Calu3 (cell line): ENCODE measurements at regions of chr5 and their contacts with region 1.

Region 1: DNA sequence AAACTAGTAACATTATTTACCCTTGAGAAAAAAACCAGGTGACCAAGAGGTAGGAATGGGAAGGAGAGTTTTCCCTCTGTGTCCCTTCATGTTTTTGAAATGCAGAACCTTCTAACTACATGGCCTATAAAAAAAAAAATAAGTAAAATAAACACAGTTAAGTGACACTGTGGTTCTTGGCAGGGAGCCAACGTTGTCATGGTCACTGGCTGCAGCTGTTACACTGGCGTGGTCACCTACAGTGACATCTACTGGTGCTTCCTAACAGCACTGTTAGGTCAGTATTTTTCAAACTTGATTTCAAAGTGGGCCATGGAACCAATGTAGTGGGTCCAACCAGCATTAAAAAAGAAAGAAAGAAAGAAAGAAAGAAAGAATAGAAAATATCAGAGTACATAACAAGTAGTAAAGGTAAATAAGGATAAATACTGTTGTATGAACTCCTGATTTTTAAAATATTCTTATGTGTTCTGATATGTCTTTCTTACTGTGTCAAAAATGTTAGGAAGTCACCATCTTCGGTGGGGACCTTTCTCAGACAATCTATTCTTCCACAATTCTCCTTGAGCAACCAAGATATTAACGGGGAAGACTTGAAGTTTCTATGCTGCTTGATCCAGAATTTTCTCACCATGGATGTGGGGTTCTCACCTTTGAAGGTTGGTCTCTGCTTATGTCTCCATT is 59.1 kb upstream of the PJA2 start:
- DNase-seq: peak; percentile 95
- H3K4me3 Mint-ChIP-seq: no peak overlapping the region
- H3K27ac Mint-ChIP-seq: peak overlapping the region; percentile 2
- H3K4me1 Mint-ChIP-seq: peaks cover 39% of the 10 kb centered on the region
- H3K27me3 Mint-ChIP-seq: no peaks in the 10 kb centered on the region
- CTCF ChIP-seq: peak; percentile 66

Region 2: DNA sequence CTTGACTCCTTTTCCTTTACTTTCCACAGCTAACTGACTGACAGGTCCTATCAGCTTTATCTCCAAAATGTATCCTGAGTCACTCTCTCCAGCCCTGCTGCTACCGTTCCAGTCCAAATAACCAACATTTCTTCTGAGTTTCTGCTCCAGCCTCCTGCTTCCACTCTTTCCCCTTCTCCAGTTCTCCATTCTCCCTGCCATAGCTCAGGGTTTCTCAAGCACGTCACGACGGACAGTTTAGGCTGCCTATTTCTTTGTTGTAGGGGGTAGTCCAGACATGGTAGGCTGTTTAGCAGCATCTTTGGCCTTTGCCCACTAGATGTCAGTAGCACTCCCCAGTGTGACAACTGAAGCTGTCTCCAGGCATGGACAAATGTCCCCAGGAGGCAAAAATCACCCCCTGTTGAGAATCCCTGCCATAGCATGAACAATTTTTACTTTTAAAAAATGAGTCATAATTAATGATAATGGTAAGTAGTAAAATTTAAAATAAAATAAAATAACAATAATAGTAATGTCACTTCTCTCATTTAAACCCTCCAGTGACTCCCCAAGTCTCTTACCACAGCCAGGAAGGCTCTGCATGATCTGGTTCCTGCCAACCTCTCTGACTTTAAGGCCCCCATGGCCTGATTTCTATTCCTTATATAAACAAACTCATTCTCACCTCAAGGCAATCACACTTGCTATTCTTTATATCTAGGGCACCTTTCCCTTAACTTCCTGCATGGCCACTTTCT is 826.5 kb before region 1 on chr5:
- CTCF ChIA-PET with region 1: interaction called, 10 read pairs
- intact Hi-C with region 1: no loop called
- DNase-seq: peak; percentile 82
- H3K4me3 Mint-ChIP-seq: peak overlapping the region; percentile 31
- H3K27ac Mint-ChIP-seq: peak overlapping the region; percentile 30
- H3K4me1 Mint-ChIP-seq: peaks cover 17% of the 10 kb centered on the region
- H3K27me3 Mint-ChIP-seq: no peaks in the 10 kb centered on the region
- CTCF ChIP-seq: peak; percentile 93

Region 3: GRCh38 chr5:108727651-108728565 is 741.0 kb before region 1 on chr5:
- CTCF ChIA-PET with region 1: no interaction called
- intact Hi-C with region 1: loop called (anchors 5 kb)
- DNase-seq: peak; percentile 95
- H3K4me3 Mint-ChIP-seq: peak overlapping the region; percentile 94
- H3K27ac Mint-ChIP-seq: peak overlapping the region; percentile 90
- H3K4me1 Mint-ChIP-seq: peaks cover 39% of the 10 kb centered on the region
- H3K27me3 Mint-ChIP-seq: no peaks in the 10 kb centered on the region
- CTCF ChIP-seq: no peak

Region 4: DNA sequence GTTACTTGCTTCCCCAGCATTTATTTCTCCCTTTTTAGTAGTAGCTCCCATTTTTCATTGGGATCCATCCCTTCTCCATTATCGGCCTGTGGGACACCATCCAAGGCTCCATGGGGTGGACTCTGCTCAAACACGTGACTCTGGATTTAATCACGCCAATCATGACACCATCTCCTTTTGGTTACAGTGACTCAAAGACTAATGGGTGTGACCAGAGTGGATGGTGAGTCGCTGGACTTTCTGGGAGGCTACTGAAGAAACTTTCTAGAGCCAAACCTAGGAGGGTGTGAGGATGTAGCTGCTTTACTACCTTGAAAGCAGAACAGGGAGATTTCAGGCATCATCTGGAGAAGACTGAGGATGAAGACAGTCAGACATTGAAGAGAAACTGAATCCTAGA is 152.2 kb before region 1 on chr5:
- CTCF ChIA-PET with region 1: interaction called, 3 read pairs
- intact Hi-C with region 1: loop called (anchors 1 kb)
- DNase-seq: no peak
- H3K4me3 Mint-ChIP-seq: no peak overlapping the region
- H3K27ac Mint-ChIP-seq: peak overlapping the region; percentile 25
- H3K4me1 Mint-ChIP-seq: peaks cover 27% of the 10 kb centered on the region
- H3K27me3 Mint-ChIP-seq: no peaks in the 10 kb centered on the region
- CTCF ChIP-seq: no peak

Region 5: DNA sequence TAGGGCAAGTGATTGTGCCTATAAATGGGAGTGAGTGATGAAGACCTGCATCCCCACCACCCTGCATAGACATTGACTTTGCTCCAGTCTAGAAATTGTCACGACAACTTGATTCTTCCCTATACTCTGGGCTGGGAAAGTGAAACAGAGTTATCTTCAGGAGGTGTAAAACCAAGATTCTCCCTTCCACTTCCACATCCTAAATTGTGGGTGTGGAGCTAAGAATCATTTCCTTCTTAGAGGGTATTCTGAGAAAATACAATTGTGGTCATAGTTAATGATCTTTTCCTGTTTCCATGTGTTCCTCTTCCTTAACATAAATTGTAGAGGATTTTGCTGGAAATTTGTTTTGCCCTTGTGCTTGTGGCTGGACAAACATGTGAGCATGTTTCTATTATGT is 37.7 kb after region 1 on chr5:
- CTCF ChIA-PET with region 1: no interaction called
- intact Hi-C with region 1: no loop called
- DNase-seq: no peak
- H3K4me3 Mint-ChIP-seq: no peak overlapping the region
- H3K27ac Mint-ChIP-seq: no peak overlapping the region
- H3K4me1 Mint-ChIP-seq: no peaks in the 10 kb centered on the region
- H3K27me3 Mint-ChIP-seq: no peaks in the 10 kb centered on the region
- CTCF ChIP-seq: no peak

Region 6: DNA sequence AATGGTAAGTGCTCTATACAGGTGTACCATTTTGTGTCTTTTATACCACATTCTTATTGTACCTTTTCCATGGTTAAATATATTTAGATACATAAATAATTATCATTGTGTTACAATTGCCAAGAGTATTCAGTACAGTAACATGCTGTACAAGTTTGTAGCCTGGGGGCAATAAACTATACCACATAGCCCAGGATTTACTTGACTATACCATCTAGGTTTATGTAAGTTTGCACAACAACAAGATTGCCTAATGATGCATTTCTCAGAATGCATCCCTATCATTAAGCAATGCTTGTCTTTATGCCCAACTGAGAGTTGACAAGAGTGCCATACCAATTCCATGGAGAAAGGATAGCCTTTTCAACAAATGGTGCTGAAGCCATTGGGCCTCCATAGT is 77.6 kb after region 1 on chr5:
- CTCF ChIA-PET with region 1: no interaction called
- intact Hi-C with region 1: no loop called
- DNase-seq: no peak
- H3K4me3 Mint-ChIP-seq: no peak overlapping the region
- H3K27ac Mint-ChIP-seq: no peak overlapping the region
- H3K4me1 Mint-ChIP-seq: no peaks in the 10 kb centered on the region
- H3K27me3 Mint-ChIP-seq: peaks cover 14% of the 10 kb centered on the region
- CTCF ChIP-seq: no peak

Region 7: GRCh38 chr5:109611505-109611904 is 142.6 kb after region 1 on chr5:
- CTCF ChIA-PET with region 1: no interaction called
- intact Hi-C with region 1: no loop called
- DNase-seq: no peak
- H3K4me3 Mint-ChIP-seq: no peak overlapping the region
- H3K27ac Mint-ChIP-seq: no peak overlapping the region
- H3K4me1 Mint-ChIP-seq: no peaks in the 10 kb centered on the region
- H3K27me3 Mint-ChIP-seq: no peaks in the 10 kb centered on the region
- CTCF ChIP-seq: no peak